Activated naive CD4-positive, alpha-beta T cell treated with anti-CD3 and anti-CD28 coated beads for 36 hours (primary cell): ENCODE measurements at regions of chr1 and their contacts with region 1.

Region 1: GRCh38 chr1:229507951-229508822 is at the start of gene NUP133:
- DNase-seq: peak; percentile 99
- H3K4me3 Mint-ChIP-seq: peak within 1 kb of the TSS; percentile 91
- H3K27ac Mint-ChIP-seq: peak within 1 kb of the TSS; percentile 91
- H3K4me1 Mint-ChIP-seq: peaks cover 25% of the 10 kb centered on the region
- H3K27me3 Mint-ChIP-seq: no peaks in the 10 kb centered on the region
- total RNA-seq, gene NUP133: 53.9 to 57.2 TPM

Region 2: GRCh38 chr1:229270547-229271447 is 237.4 kb before region 1 on chr1 and contains the start of gene RAB4A:
- CTCF ChIA-PET with region 1: no interaction called
- intact Hi-C with region 1: loop called (anchors 5 kb)
- DNase-seq: peak; percentile 57
- H3K4me3 Mint-ChIP-seq: peak within 1 kb of the TSS; percentile 86
- H3K27ac Mint-ChIP-seq: peak within 1 kb of the TSS; percentile 75
- H3K4me1 Mint-ChIP-seq: peaks cover 33% of the 10 kb centered on the region
- H3K27me3 Mint-ChIP-seq: no peaks in the 10 kb centered on the region
- total RNA-seq, gene RAB4A: 15.8 to 19.9 TPM

Region 3: GRCh38 chr1:229558571-229559335 is 50.6 kb after region 1 on chr1 and contains the start of gene ABCB10:
- CTCF ChIA-PET with region 1: interaction called, 4 read pairs
- intact Hi-C with region 1: loop called (anchors 1 kb)
- DNase-seq: peak; percentile 92
- H3K4me3 Mint-ChIP-seq: peak within 1 kb of the TSS; percentile 88
- H3K27ac Mint-ChIP-seq: peak within 1 kb of the TSS; percentile 79
- H3K4me1 Mint-ChIP-seq: peaks cover 27% of the 10 kb centered on the region
- H3K27me3 Mint-ChIP-seq: no peaks in the 10 kb centered on the region
- total RNA-seq, gene ABCB10: 18.9 to 19.1 TPM

Region 4: DNA sequence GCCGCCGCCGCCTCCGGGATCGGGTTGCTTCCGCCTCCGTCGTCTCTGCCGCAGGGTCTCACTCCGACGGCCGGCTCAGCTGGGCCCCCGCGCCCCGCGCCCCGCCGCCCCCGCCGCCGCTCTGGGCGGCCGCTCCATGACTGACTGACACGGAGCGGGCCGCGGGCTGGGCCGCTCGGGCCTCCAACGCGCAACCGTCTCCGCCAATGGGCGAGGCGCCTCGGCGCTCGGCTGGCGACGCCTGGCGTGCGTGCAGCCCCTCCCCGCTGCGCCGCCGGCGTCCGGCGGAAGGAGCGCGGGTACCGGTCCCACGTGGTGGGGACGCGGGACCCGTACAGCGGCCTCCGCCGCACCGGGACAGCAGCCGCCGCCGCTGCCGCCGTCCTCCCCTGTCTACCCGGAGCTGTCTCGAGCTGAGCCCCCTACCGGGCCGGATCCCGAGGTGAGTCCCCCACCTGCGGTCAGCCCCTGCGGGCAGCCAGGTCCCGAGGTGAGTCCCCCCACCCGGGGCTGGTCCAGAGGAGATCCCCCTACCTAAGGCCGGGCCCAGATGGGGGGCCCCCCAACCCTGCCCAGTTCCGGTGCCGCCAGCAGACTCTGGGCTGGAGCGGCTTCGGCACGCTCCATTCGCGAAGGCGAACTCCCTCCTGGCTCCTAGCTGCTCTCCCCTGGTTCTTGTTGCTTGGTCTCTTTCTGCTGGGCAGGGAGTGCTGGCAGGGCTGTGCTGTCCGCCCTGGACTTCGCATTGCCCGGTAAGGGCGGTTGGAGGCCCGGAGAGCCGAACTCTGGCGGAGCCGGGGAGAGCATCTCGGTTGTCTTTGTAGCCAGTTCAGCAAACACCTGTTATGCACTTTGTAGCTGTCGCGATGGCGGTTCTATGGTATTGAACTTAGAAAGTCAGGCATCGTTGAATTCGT is 118.0 kb after region 1 on chr1 and contains the starts of genes TAF5L and URB2:
- CTCF ChIA-PET with region 1: no interaction called
- intact Hi-C with region 1: loop called (anchors 1 kb)
- DNase-seq: peak; percentile 85
- H3K4me3 Mint-ChIP-seq: peak within 1 kb of the TSS; percentile 99
- H3K27ac Mint-ChIP-seq: peak within 1 kb of the TSS; percentile 89
- H3K4me1 Mint-ChIP-seq: peaks cover 51% of the 10 kb centered on the region
- H3K27me3 Mint-ChIP-seq: no peaks in the 10 kb centered on the region
- total RNA-seq, gene TAF5L: 10.3 TPM
- total RNA-seq, gene URB2: 9.5 to 10.0 TPM

Region 5: GRCh38 chr1:230310381-230311163 is 802.4 kb after region 1 on chr1:
- CTCF ChIA-PET with region 1: no interaction called
- intact Hi-C with region 1: loop called (anchors 10 kb)
- DNase-seq: peak; percentile 75
- H3K4me3 Mint-ChIP-seq: no peak overlapping the region
- H3K27ac Mint-ChIP-seq: no peak overlapping the region
- H3K4me1 Mint-ChIP-seq: peaks cover 10% of the 10 kb centered on the region
- H3K27me3 Mint-ChIP-seq: peaks cover 4% of the 10 kb centered on the region